ENCODE measurements at regions of chr12 and their contacts with region 1.

Region 1: GRCh38 chr12:40312982-40313576 is 88.3 kb downstream of the LRRK2 start:
- DNase-seq: no peak
- H3K4me3 ChIP-seq: no peak overlapping the region
- H3K27ac ChIP-seq: no peak overlapping the region
- H3K4me1 ChIP-seq: peaks cover 10% of the 10 kb centered on the region
- H3K27me3 ChIP-seq: no peaks in the 10 kb centered on the region
- CTCF ChIP-seq: peak; percentile 64 to 66

Region 2: GRCh38 chr12:39990122-39991101 is 322.7 kb before region 1 on chr12:
- CTCF ChIA-PET with region 1: no interaction called
- dilution Hi-C with region 1: no loop called
- in situ Hi-C with region 1: no loop called
- intact Hi-C with region 1: loop called (anchors 5 kb)
- DNase-seq: peak; percentile 19
- H3K4me3 ChIP-seq: no peak overlapping the region
- H3K27ac ChIP-seq: no peak overlapping the region
- H3K4me1 ChIP-seq: peaks cover 3% of the 10 kb centered on the region
- H3K27me3 ChIP-seq: no peaks in the 10 kb centered on the region
- CTCF ChIP-seq: peak; percentile 83 to 88

Region 3: GRCh38 chr12:40107098-40107802 is 205.8 kb before region 1 on chr12:
- CTCF ChIA-PET with region 1: interaction called, 3 read pairs
- dilution Hi-C with region 1: no loop called
- in situ Hi-C with region 1: no loop called
- intact Hi-C with region 1: loop called (anchors 2 kb)
- DNase-seq: peak; percentile 67
- H3K4me3 ChIP-seq: peak overlapping the region; percentile 38 to 88 (median 54)
- H3K27ac ChIP-seq: no peak overlapping the region
- H3K4me1 ChIP-seq: peaks cover 18% of the 10 kb centered on the region
- H3K27me3 ChIP-seq: no peaks in the 10 kb centered on the region
- CTCF ChIP-seq: peak; percentile 85 to 89

Region 4: DNA sequence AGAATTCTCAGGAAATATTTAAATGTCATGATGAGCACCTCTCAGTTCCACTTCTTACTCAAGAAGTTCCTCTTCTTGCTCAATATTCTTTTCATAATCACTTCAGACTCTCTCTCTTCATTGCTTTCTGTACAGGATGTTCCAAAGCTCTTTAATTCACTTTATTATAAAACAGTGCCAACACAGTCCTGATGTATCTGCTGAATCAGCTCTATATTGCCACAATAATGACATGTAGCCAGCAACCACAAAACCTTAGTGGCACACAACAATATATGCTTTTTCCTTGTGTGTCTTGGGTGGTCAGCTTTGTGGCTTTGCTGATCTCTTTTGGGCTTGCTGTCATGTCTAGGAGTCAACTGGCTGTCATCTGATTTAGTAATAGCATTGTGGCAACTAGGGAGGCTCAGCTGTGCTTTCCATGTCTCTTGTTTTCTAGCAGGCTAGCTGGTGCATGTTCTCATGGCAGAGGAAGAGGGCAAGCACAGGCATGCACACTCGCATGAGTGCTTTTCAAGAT is 154.4 kb before region 1 on chr12:
- CTCF ChIA-PET with region 1: no interaction called
- dilution Hi-C with region 1: no loop called
- in situ Hi-C with region 1: loop called (anchors 5 kb)
- intact Hi-C with region 1: no loop called
- DNase-seq: peak; percentile 98
- H3K4me3 ChIP-seq: peak overlapping the region in 1 of 3 experiments; percentile 22
- H3K27ac ChIP-seq: peak overlapping the region; percentile 12
- H3K4me1 ChIP-seq: peaks cover 24% of the 10 kb centered on the region
- H3K27me3 ChIP-seq: no peaks in the 10 kb centered on the region
- CTCF ChIP-seq: no peak

Region 5: DNA sequence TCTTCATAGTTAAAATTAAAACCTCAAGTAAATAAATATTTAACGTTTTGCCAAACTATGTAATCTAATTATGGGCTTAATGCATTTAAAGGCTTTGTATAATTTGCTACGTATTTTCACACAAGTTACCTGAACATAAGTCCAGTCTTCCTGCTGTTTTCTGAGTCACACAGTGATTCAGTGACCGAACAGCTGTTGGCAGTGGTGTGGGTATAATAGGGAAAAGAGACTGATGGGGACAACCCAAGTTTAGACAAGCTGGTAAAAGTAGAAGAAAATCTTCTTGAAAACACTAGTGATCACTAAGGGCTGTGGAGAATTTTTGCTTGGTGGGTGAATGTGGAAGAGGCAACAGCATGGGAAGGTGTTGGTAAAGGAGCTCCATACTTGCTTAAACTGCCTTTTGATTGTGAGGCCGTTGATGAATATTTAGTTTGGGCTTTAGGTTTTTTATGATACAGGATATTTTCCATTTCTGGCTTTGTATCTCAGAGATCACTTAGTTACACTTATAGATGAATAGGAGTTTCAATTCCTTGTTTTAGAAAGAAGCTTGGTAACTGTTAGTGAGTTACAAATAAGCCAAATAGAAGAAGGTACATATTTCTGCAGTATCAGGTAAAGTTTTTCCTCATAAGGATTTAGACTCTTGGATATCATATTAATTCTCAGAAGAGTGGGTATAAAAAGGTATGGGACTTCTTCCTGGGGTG is 64.3 kb before region 1 on chr12:
- CTCF ChIA-PET with region 1: no interaction called
- dilution Hi-C with region 1: no loop called
- in situ Hi-C with region 1: no loop called
- intact Hi-C with region 1: no loop called
- DNase-seq: peak; percentile 76
- H3K4me3 ChIP-seq: no peak overlapping the region
- H3K27ac ChIP-seq: no peak overlapping the region
- H3K4me1 ChIP-seq: peaks cover 5% of the 10 kb centered on the region
- H3K27me3 ChIP-seq: no peaks in the 10 kb centered on the region
- CTCF ChIP-seq: no peak

Region 6: DNA sequence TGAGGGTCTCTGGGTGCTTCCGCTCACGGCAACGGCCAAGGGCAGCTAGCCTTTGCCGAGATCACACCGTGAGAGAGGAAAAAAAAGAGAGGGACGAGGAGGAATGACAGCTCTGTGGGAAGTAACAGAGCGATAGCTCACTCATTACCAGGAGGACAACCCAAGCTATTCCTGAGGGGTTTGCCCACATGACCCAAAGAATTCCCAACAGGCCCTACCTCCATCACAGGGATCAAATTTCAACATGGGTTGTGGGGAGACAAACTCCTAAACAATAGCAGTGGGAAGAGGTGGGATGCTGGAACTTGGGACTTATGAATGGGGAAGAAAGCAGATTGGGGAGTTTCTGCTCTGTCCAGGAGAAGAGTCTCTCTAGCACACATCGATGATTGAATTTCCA is 92.3 kb after region 1 on chr12:
- CTCF ChIA-PET with region 1: no interaction called
- dilution Hi-C with region 1: no loop called
- in situ Hi-C with region 1: no loop called
- intact Hi-C with region 1: no loop called
- DNase-seq: no peak
- H3K4me3 ChIP-seq: no peak overlapping the region
- H3K27ac ChIP-seq: no peak overlapping the region
- H3K4me1 ChIP-seq: peaks cover 10% of the 10 kb centered on the region
- H3K27me3 ChIP-seq: no peaks in the 10 kb centered on the region
- CTCF ChIP-seq: no peak